Adrenal gland (tissue), 19 donors: ENCODE measurements at regions of chr5 and their contacts with region 1.

Region 1: DNA sequence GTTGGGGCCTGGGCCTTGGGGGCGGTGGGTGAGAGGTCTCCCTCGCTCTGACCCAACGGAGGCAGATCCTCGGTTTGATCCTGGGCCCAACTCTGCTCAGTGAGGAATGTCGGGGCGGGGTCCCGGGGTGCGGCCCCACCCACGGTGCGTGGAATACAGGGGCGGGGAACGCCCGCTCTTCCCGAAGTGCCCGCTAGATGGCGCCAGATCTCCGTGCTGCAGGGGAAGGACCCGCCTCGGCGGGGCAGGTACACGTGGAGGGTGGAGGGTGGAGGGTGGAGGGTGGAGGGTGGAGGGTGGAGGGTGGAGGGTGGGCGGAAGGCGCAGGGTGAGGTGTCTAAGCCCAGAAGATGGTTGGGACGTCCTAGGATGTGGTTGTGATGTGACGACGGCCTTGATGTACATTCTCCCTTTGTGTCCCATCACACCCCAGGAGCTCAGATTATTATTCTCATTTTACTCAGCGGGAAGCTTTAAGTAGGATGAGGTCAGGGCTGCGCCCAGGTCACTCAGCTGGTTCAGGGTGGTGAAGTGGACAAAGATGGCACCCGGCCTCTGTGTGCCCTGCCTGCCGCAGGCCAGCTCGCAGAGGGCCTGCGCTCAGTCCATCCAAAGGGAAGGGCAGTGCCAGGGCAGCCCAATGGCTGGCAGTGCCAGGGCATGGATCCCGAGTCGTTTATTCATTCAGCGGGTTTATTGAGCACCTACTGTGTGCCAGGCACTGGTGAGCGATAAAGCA is 9.4 kb upstream of the RPS14 start:
- DNase-seq: peak; percentile 67 to 88 (median 73)
- H3K4me3 ChIP-seq: no peak overlapping the region
- H3K27ac ChIP-seq: no peak overlapping the region
- H3K4me1 ChIP-seq: peaks cover 0 to under 1% of the 10 kb centered on the region in 2 donors
- H3K27me3 ChIP-seq: no peaks in the 10 kb centered on the region
- CTCF ChIP-seq: peak; percentile 57 to 94 (median 80)
- POLR2A ChIP-seq: no peak

Region 2: GRCh38 chr5:150527038-150527437 is 68.0 kb after region 1 on chr5:
- intact Hi-C with region 1: loop called (anchors 5 kb)
- DNase-seq: no peak
- H3K4me3 ChIP-seq: no peak overlapping the region
- H3K27ac ChIP-seq: no peak overlapping the region
- H3K4me1 ChIP-seq: peaks cover 18 to 32% of the 10 kb centered on the region in 2 donors
- H3K27me3 ChIP-seq: no peaks in the 10 kb centered on the region
- CTCF ChIP-seq: no peak
- POLR2A ChIP-seq: no peak

Region 3: DNA sequence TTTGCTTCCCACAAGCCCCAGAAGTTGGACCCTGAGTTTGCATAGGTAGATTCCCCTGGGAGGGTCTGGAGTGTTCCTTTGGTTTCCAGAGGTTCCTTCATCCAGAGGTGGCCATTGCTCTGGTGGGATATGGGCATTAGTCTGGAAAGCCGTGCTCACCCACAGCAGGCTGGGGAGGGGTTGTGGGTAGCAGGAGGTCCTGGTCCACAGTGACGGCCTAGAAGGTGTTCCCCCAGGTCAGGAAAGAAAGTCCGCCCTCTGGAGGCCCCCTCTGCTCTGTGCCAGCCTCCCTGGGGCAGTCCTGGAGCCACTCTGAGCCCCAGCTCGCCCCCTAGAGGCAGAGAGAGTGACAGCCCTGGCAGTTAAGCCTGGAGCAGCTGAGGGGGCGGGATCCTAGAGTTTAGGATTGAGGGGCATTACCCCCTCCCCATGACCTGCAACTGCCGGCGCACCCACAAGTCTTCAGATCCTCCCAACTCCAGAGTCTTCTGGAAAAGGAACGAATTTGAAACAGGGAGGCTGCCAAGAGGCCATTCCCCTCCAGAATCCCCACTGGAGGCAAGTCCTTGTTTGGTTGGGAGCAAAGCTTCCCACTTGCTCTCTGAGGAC is 85.7 kb after region 1 on chr5:
- intact Hi-C with region 1: loop called (anchors 2 to 5 kb)
- DNase-seq: peak; percentile 78 to 87 (median 82)
- H3K4me3 ChIP-seq: no peak overlapping the region
- H3K27ac ChIP-seq: peak overlapping the region in 1 of 5 donors; percentile 29
- H3K4me1 ChIP-seq: peaks cover 22 to 35% of the 10 kb centered on the region in 2 donors
- H3K27me3 ChIP-seq: no peaks in the 10 kb centered on the region
- CTCF ChIP-seq: peak; percentile 73 to 91 (median 84)
- POLR2A ChIP-seq: no peak

Region 4: GRCh38 chr5:150656191-150657132 is 197.5 kb after region 1 on chr5:
- intact Hi-C with region 1: no loop called
- DNase-seq: peak; percentile 64 to 86 (median 75)
- H3K4me3 ChIP-seq: peak overlapping the region in 2 of 4 donors; percentile 20 to 38
- H3K27ac ChIP-seq: peak overlapping the region in 4 of 5 donors; percentile 58 to 83 (median 71)
- H3K4me1 ChIP-seq: peaks cover 12 to 47% of the 10 kb centered on the region in 2 donors
- H3K27me3 ChIP-seq: no peaks in the 10 kb centered on the region
- CTCF ChIP-seq: peak in 5 of 6 experiments; percentile 21 to 79 (median 66)
- POLR2A ChIP-seq: no peak

Region 5: DNA sequence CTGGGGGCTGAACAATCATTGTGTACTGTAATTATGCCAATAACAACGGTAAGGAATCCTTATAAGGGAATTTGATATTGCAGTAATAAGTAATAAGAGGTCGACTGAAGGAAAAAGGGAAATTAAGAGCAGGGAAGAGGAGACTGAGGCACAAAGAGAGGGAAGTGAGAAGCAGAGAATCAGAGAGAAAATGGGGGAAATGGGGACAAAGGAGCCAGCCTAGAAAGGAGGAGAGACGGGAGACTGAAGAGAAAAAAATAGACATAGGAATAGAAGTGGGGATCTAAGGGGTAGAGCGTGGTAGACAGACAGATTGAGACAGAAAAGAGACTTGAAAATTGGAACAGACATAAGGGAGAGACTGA is 446.3 kb after region 1 on chr5:
- intact Hi-C with region 1: no loop called
- DNase-seq: no peak
- H3K4me3 ChIP-seq: peak overlapping the region in 2 of 4 donors; percentile 13 to 55
- H3K27ac ChIP-seq: peak overlapping the region in 1 of 5 donors; percentile 73
- H3K4me1 ChIP-seq: no peaks in the 10 kb centered on the region
- H3K27me3 ChIP-seq: no peaks in the 10 kb centered on the region
- CTCF ChIP-seq: no peak
- POLR2A ChIP-seq: no peak